Testis (tissue), 5 donors: ENCODE measurements at regions of chr20 and their contacts with region 1.

Region 1: DNA sequence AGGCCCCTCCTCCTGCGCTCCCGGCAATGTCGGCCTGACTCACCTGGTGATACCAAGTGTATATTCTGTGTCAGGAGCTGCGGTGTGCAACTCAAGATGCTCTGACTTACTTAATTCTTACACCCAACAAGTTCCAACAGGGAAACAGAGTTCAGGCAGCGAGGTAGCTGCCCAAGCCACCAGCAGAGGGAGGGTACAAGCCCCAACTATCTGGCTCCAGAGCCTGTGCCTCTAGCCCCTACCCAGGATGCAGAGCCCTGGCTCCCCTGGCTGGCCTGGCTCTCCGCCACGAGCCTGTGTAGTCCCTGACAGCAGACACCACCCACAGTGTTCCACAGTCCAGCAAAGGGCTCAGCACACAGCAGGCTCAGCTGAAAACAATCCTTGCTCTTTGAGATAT is 34.9 kb downstream of the C20orf203 start:
- DNase-seq: peak; percentile 81
- H3K4me3 ChIP-seq: no peak overlapping the region
- H3K27ac ChIP-seq: peak overlapping the region in 1 of 2 donors; percentile 34
- H3K4me1 ChIP-seq: peaks cover 41% of the 10 kb centered on the region
- H3K27me3 ChIP-seq: no peaks in the 10 kb centered on the region
- CTCF ChIP-seq: no peak
- POLR2A ChIP-seq: no peak

Region 2: DNA sequence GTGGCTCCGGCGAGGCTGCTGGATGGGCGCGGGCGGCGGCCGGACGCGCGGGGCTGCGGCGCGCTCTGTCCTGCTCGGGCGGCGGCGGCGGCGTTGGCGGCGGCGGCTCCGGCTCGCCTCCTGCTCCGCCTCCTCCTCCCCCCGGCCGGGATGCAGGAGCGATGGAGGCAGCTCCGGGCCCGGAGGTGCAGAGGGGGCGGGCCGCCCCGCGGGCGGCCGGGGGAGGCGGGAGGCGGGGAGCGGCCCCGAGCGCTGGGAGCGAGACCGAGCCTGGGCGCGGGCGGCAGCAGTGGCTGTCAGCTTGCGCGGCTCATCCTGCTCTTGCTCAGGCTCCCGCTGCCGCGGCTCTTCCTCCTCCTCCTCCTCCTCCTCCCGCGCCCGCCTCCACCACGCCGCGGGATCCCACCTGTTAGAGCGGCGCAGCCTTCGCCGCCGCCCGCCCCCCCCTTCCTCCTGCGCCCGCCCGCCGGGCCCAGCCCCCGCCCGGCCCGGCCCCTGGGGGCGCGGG is 53.8 kb before region 1 on chr20 and contains the start of gene NOL4L:
- intact Hi-C with region 1: loop called (anchors 5 kb)
- DNase-seq: peak; percentile 40
- H3K4me3 ChIP-seq: peak within 1 kb of the TSS; percentile 65 to 66
- H3K27ac ChIP-seq: peak within 1 kb of the TSS in 1 of 2 donors; percentile 71
- H3K4me1 ChIP-seq: peaks cover 10% of the 10 kb centered on the region
- H3K27me3 ChIP-seq: no peaks in the 10 kb centered on the region
- CTCF ChIP-seq: no peak
- POLR2A ChIP-seq: no peak
- total RNA-seq, gene NOL4L: 100.0 to 115 TPM